ENCODE measurements at regions of chr9 and their contacts with region 1.

Region 1: DNA sequence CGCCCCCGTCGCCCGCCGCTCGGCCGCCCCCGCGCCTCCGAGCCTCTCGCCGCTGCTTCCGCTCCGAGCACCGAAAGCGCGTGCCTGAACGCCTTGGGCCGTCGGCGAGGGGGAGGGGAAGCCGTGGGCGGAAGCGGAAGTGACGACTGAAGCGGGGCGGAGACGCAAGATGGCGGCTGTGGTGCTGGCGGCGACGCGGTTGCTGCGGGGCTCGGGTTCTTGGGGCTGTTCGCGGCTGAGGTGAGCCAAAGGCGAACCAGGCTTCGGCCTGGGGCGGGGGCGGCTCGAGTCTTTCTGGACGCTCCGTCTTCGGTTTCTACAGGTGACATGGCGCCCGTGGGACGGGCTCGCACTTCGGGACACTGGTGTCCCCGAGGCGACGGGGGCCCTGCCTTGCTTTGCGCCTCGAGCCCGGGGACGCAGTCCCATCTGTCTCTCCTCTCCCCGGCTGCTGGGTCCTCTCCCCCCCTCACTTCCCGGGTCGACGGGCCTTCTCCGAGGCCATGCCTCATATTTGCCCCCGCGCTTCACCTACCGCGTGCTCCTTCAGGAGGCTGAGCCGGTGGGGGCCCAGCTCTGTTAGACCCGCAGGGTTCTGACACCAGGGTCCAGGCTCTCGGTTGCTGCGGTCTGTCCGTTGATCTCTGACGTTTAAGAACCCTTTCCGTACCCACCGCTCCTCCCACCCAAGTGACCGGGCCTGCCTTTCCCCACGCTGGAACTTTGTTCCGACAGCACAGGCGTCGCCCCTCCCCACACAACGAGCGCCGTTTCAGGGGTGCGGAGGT is at the starts of genes ENTR1 and PMPCA:
- DNase-seq: peak in 1 of 2 experiments; percentile 94
- H3K4me3 ChIP-seq: peak within 1 kb of the TSS; percentile 87 to 93 (median 92)
- H3K27ac ChIP-seq: peak within 1 kb of the TSS; percentile 75
- H3K4me1 ChIP-seq: peaks cover 0 to 3% (median 3%) of the 10 kb centered on the region in 4 experiments; a peak in 4 of 7 replicates
- H3K27me3 ChIP-seq: no peaks in the 10 kb centered on the region
- CTCF ChIP-seq: no peak
- EP300 ChIP-seq: no peak
- POLR2A ChIP-seq: peak; percentile 82 to 91
- RAD21 ChIP-seq: no peak
- total RNA-seq, gene ENTR1: 102 and 110 TPM in 2 replicates
- total RNA-seq, gene PMPCA: 88.2 and 89.2 TPM in 2 replicates

Region 2: DNA sequence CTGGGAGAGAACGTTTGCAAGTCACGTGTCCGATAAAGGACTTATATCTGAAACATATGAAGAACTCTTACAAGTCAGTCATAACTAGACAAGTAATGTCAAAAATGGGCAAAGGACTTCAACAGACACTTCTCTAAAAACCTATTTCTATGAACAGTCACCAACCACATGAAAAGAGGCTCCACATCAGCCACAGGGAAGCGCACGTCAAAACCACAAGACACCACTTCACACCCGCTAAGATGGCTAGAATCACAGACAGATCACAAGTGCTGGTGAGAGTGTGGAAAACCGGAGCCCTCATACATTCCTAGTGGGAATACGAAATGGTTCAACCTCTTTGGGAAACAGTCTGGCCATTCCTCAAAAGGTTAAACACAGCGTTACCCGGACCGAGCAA is 25.7 kb before region 1 on chr9:
- CTCF ChIA-PET with region 1: interaction called, 3 read pairs
- POLR2A ChIA-PET with region 1: interaction called, 10 read pairs
- DNase-seq: no peak
- H3K4me3 ChIP-seq: no peak overlapping the region
- H3K27ac ChIP-seq: no peak overlapping the region
- H3K4me1 ChIP-seq: no peaks in the 10 kb centered on the region
- H3K27me3 ChIP-seq: no peaks in the 10 kb centered on the region
- CTCF ChIP-seq: no peak
- EP300 ChIP-seq: no peak
- POLR2A ChIP-seq: no peak
- RAD21 ChIP-seq: no peak

Region 3: GRCh38 chr9:136424750-136425362 is 14.2 kb after region 1 on chr9:
- CTCF ChIA-PET with region 1: interaction called, 7 read pairs
- POLR2A ChIA-PET with region 1: interaction called, 26 read pairs
- DNase-seq: no peak
- H3K4me3 ChIP-seq: no peak overlapping the region
- H3K27ac ChIP-seq: no peak overlapping the region
- H3K4me1 ChIP-seq: no peaks in the 10 kb centered on the region
- H3K27me3 ChIP-seq: no peaks in the 10 kb centered on the region
- CTCF ChIP-seq: no peak
- EP300 ChIP-seq: no peak
- POLR2A ChIP-seq: no peak
- RAD21 ChIP-seq: no peak

Region 4: GRCh38 chr9:136527721-136528691 is 117.3 kb after region 1 on chr9:
- CTCF ChIA-PET with region 1: no interaction called
- POLR2A ChIA-PET with region 1: no interaction called
- DNase-seq: no peak
- H3K4me3 ChIP-seq: no peak overlapping the region
- H3K27ac ChIP-seq: no peak overlapping the region
- H3K4me1 ChIP-seq: peaks cover 0 to 24% (median 14%) of the 10 kb centered on the region in 4 experiments; a peak in 5 of 7 replicates
- H3K27me3 ChIP-seq: no peaks in the 10 kb centered on the region
- CTCF ChIP-seq: no peak
- EP300 ChIP-seq: no peak
- POLR2A ChIP-seq: no peak
- RAD21 ChIP-seq: no peak

Measured in H1 (cell line).